Heart right ventricle (tissue), 16 donors: ENCODE measurements at regions of chr9 and their contacts with region 1.

Region 1: DNA sequence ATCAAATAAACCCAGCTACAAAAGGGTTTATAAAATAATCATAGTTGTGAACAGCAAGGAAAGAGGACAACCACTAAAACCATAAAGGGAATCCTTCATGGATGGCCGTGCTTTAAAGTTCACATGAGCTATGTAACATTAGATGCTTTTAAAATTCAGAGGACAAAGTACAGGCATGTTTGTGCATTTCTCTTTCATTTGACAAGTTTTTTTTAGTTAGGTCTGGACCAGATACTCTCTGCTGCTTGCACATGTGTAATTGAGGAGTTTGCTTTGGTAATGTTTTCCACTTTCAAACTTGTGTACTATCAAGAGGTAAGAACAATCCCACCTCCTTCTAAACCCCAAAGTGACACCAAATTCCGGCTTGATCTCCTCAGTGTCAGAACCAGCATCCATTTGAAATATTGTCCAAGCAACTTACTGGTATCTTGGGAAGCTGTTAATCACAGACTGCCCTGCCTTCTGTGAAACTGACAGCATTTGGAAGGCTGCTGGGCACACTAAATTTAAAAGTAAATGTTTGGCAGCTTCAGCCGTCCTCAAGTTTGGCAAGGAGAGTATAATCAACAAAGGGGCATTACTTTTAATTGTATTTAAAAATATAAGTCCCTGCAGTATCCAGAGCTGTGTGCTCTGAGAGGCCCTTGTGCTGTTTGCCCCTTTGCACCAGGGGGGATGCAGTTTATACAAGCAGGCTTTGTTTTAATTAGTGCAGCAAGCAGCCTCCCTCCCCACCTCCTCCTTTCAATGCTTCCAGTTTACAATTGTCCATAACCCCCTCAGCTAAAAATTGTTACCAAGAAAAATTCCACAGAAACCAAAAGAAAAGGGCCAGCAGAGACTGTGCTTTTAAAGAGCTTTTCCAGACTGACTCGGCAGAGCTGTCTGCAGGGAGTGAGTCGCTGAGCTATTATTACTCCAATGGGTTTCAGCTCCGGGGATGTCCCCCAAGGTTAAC is 328.3 kb upstream of the MPDZ start:
- DNase-seq: peak in 1 of 2 donors; percentile 45
- ATAC-seq: peak; percentile 82 to 95 (median 89)
- H3K4me3 ChIP-seq: peak overlapping the region in 8 of 10 donors; percentile 2 to 39 (median 22)
- H3K27ac ChIP-seq: peak overlapping the region; percentile 64 to 90 (median 80)
- H3K4me1 ChIP-seq: peaks cover 5 to 48% (median 29%) of the 10 kb centered on the region in 9 donors
- H3K27me3 ChIP-seq: no peaks in the 10 kb centered on the region
- CTCF ChIP-seq: no peak

Region 2: GRCh38 chr9:13485068-13485596 is 122.6 kb before region 1 on chr9:
- intact Hi-C with region 1: loop called in 1 of 10 experiments (anchors 10 kb)
- DNase-seq: peak; percentile 30 to 76
- ATAC-seq: peak; percentile 95 to 98 (median 96)
- H3K4me3 ChIP-seq: no peak overlapping the region
- H3K27ac ChIP-seq: peak overlapping the region in 9 of 10 donors; percentile 36 to 82 (median 72)
- H3K4me1 ChIP-seq: peaks cover 0 to 29% (median 14%) of the 10 kb centered on the region in 9 donors
- H3K27me3 ChIP-seq: no peaks in the 10 kb centered on the region
- CTCF ChIP-seq: peak in 2 of 9 donors; percentile 10 to 18

Region 3: DNA sequence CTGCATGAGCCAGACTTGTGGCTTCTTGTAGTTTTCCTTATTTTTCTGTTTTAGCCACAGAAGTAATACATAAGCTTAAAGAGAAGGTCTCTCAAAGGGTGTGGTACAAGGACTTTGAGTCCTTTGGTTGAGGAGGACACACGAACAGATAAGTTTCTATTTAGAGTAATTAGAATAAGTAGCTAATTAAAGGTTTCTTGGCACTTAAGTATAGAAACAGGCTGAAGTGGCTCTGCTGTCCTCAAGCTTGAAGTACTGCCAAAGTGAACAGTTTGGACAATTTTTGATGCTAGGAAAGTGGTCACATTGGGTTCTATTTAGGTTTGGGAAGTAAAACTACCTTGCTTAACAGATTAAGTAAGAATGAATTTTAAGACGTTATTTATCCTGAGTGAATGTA is 50.0 kb before region 1 on chr9:
- intact Hi-C with region 1: loop called in 1 of 10 experiments (anchors 5 kb)
- DNase-seq: no peak
- ATAC-seq: peak; percentile 28 to 95 (median 75)
- H3K4me3 ChIP-seq: no peak overlapping the region
- H3K27ac ChIP-seq: peak overlapping the region in 8 of 10 donors; percentile 26 to 68 (median 54)
- H3K4me1 ChIP-seq: peaks cover 0 to 31% (median 9%) of the 10 kb centered on the region in 9 donors
- H3K27me3 ChIP-seq: no peaks in the 10 kb centered on the region
- CTCF ChIP-seq: no peak

Region 4: DNA sequence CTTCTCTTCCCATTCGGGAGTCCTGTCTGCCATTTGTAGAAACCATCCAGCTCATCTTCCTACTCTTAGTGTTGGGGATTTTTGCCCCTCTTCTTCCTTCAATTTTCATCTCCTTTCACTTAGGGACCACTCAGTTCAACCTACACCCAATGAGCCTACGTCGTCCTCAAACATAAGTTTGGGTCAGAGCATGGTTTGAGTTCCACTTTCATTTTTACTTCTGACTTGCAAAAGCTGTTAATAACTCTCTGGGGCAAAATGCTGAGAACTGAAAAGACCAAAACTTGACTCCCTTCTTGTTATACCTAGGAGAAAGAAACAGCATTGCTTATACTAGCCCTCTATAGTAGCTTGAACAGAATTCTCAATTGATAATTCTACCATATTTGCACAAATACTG is 53.3 kb after region 1 on chr9:
- intact Hi-C with region 1: no loop called
- DNase-seq: no peak
- ATAC-seq: peak in 2 of 8 donors; percentile 7 to 24
- H3K4me3 ChIP-seq: peak overlapping the region in 7 of 10 donors; percentile 1 to 33 (median 20)
- H3K27ac ChIP-seq: peak overlapping the region in 5 of 10 donors; percentile 20 to 68 (median 42)
- H3K4me1 ChIP-seq: peaks cover 0 to 17% (median 4%) of the 10 kb centered on the region in 9 donors
- H3K27me3 ChIP-seq: no peaks in the 10 kb centered on the region
- CTCF ChIP-seq: no peak

Region 5: GRCh38 chr9:13787234-13787833 is 179.6 kb after region 1 on chr9:
- intact Hi-C with region 1: loop called in 1 of 10 experiments (anchors 5 kb)
- DNase-seq: peak in 1 of 2 donors; percentile 82
- ATAC-seq: peak; percentile 84 to 95 (median 90)
- H3K4me3 ChIP-seq: peak overlapping the region in 8 of 10 donors; percentile 2 to 41 (median 26)
- H3K27ac ChIP-seq: peak overlapping the region; percentile 80 to 95 (median 87)
- H3K4me1 ChIP-seq: peaks cover 5 to 34% (median 26%) of the 10 kb centered on the region in 9 donors
- H3K27me3 ChIP-seq: no peaks in the 10 kb centered on the region
- CTCF ChIP-seq: no peak

Region 6: GRCh38 chr9:13898957-13899356 is 291.2 kb after region 1 on chr9:
- intact Hi-C with region 1: loop called in 1 of 10 experiments (anchors 10 kb)
- DNase-seq: peak in 1 of 2 donors; percentile 26
- ATAC-seq: no peak
- H3K4me3 ChIP-seq: no peak overlapping the region
- H3K27ac ChIP-seq: peak overlapping the region in 9 of 10 donors; percentile 37 to 86 (median 70)
- H3K4me1 ChIP-seq: peaks cover 0 to 64% (median 41%) of the 10 kb centered on the region in 9 donors
- H3K27me3 ChIP-seq: no peaks in the 10 kb centered on the region
- CTCF ChIP-seq: no peak